PC-3 (cell line): ENCODE measurements at regions of chr1 and their contacts with region 1.

Region 1: DNA sequence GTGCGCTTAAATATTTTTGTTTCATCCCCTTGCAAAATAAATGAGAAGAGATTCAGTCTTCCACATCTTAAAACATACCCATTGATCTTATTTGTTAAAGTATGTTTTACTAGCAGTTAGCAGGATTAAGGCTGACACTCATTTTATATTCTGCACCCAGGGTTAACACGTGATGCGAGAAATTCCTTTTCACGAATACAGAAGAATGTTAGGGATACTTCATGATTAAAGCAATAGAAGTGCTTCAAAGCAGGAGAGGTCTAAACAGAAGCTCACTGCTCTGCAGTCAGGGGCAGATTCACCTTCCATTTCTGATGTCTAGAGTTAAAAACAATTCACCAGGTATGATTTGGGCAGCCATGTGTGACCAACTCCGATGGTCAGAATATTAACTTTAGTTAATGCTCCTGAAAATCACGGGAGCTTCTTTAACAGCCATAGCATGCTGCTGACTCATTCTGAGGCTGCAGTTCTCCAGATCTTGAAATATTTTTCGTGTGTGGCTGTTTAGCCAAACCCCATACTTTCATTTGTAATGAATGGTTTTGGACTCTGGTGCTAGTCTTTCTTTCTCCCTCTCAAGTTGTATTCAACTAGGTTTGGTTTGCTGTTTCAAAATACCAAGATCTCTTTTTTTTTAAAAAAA is 19.7 kb downstream of the BCAR3 start:
- DNase-seq: peak; percentile 71
- ATAC-seq: peak; percentile 17
- H3K4me3 ChIP-seq: no peak overlapping the region
- H3K27ac ChIP-seq: peak overlapping the region; percentile 86
- H3K4me1 ChIP-seq: peaks cover 60% of the 10 kb centered on the region
- H3K27me3 ChIP-seq: no peaks in the 10 kb centered on the region
- CTCF ChIP-seq: no peak

Region 2: GRCh38 chr1:93468662-93469061 is 193.3 kb before region 1 on chr1:
- CTCF ChIA-PET with region 1: no interaction called
- POLR2A ChIA-PET with region 1: no interaction called
- intact Hi-C with region 1: no loop called
- DNase-seq: no peak
- ATAC-seq: no peak
- H3K4me3 ChIP-seq: no peak overlapping the region
- H3K27ac ChIP-seq: no peak overlapping the region
- H3K4me1 ChIP-seq: peaks cover 20% of the 10 kb centered on the region
- H3K27me3 ChIP-seq: no peaks in the 10 kb centered on the region
- CTCF ChIP-seq: no peak

Region 3: DNA sequence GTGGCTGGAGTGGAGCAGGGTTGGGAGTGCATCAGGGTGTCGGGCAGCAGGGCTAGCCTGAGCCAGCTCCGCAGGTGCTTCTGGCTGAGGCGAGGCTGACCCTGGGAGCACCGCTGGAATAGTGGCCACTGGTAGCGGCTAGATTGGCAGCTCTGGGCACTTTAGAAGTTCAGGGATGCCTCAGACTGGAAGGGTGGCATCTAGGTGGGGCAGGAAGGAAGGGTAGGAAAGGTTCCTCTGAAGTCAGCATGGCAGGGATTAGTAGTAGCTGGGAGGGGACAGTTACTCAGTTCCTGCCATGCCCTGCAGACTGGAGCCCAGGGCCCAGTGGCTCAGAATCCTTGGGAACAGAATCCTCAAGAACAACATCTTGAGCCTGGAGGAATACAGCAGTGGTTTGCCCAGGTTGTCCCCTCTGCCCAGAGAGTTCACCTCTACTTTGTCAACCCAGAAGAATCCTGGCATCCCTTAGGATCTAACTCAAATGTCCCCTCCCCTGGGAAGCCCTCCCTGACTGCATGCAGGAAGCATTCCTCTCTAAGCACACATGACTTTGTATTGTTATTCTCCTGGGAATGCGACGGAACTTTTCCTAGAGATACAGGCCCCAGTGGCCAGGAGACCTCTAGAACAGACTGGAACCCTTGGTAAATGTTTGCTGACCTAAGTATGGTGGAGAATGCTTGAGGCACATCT is 59.1 kb after region 1 on chr1:
- CTCF ChIA-PET with region 1: no interaction called
- POLR2A ChIA-PET with region 1: interaction called, 10 read pairs
- intact Hi-C with region 1: no loop called
- DNase-seq: peak; percentile 83
- ATAC-seq: peak; percentile 87
- H3K4me3 ChIP-seq: no peak overlapping the region
- H3K27ac ChIP-seq: peak overlapping the region; percentile 94
- H3K4me1 ChIP-seq: peaks cover 41% of the 10 kb centered on the region
- H3K27me3 ChIP-seq: no peaks in the 10 kb centered on the region
- CTCF ChIP-seq: no peak